ENCODE measurements at regions of chr7 and their contacts with region 1.

Region 1: GRCh38 chr7:30322271-30323005 is 38.0 kb downstream of the ZNRF2 start:
- DNase-seq: peak in 6 of 9 experiments; percentile 8 to 76 (median 18)
- ATAC-seq: peak; percentile 63
- H3K4me3 ChIP-seq: peak overlapping the region; percentile 26 to 30
- H3K4me3 Mint-ChIP-seq: peak overlapping the region; percentile 87
- H3K27ac ChIP-seq: peak overlapping the region; percentile 53 to 92
- H3K27ac Mint-ChIP-seq: peak overlapping the region; percentile 98
- H3K4me1 ChIP-seq: peaks cover 31% of the 10 kb centered on the region
- H3K4me1 Mint-ChIP-seq: peaks cover 77% of the 10 kb centered on the region
- H3K27me3 ChIP-seq: no peaks in the 10 kb centered on the region
- H3K27me3 Mint-ChIP-seq: no peaks in the 10 kb centered on the region
- CTCF ChIP-seq: no peak

Region 2: DNA sequence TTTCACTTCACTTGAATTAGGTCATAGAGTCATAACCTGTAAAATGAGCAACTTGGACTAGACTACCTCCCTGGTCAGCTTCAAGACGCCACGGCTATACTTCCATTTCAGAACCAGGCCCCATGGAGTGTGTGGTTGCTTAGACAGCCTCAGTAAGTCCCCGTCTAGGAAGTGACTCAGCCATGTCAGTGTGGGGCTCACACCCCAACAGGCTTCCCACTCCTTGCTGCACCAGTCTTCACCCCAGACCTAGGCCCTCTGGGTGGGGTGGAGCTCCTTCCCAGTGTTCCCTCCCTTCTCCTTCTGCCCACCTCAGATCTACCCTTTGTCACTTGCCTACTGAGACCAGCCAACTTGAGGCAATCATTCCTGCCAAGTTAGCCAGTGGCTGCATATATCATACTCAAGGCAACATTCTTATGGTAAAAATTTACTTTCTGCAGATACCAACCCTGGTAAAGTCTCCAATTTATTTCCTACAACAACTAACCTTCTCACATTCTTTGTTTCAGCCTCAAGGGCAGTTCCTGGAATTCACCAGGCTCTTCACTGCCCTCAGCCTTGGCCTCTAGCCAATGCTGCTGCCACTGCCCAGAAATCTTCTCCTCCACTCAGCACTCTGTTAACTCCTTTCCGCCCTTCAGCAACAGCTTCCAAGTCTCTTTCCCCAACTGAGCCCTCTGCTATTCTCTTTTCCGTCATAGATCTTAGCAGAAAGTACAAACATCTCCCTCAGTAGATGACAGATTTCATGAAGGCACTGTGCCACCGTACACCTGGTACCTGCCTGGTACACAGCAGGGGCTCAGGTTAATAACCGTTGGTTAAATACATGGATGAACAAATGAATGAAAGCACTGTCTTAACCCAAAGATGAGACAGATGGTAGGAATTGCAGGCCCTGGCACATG is 69.3 kb before region 1 on chr7:
- CTCF ChIA-PET with region 1: no interaction called
- POLR2A ChIA-PET with region 1: no interaction called
- intact Hi-C with region 1: no loop called
- DNase-seq: no peak
- ATAC-seq: no peak
- H3K4me3 ChIP-seq: no peak overlapping the region
- H3K4me3 Mint-ChIP-seq: no peak overlapping the region
- H3K27ac ChIP-seq: no peak overlapping the region
- H3K27ac Mint-ChIP-seq: no peak overlapping the region
- H3K4me1 ChIP-seq: peaks cover 8% of the 10 kb centered on the region
- H3K4me1 Mint-ChIP-seq: peaks cover 16% of the 10 kb centered on the region
- H3K27me3 ChIP-seq: no peaks in the 10 kb centered on the region
- H3K27me3 Mint-ChIP-seq: no peaks in the 10 kb centered on the region
- CTCF ChIP-seq: no peak

Region 3: GRCh38 chr7:30308389-30308788 is 14.0 kb before region 1 on chr7:
- CTCF ChIA-PET with region 1: interaction called, 3 read pairs
- POLR2A ChIA-PET with region 1: interaction called, 8 read pairs
- intact Hi-C with region 1: loop called (anchors 1 to 2 kb)
- DNase-seq: no peak
- ATAC-seq: no peak
- H3K4me3 ChIP-seq: no peak overlapping the region
- H3K4me3 Mint-ChIP-seq: no peak overlapping the region
- H3K27ac ChIP-seq: no peak overlapping the region
- H3K27ac Mint-ChIP-seq: no peak overlapping the region
- H3K4me1 ChIP-seq: peaks cover 25% of the 10 kb centered on the region
- H3K4me1 Mint-ChIP-seq: peaks cover 79% of the 10 kb centered on the region
- H3K27me3 ChIP-seq: no peaks in the 10 kb centered on the region
- H3K27me3 Mint-ChIP-seq: no peaks in the 10 kb centered on the region
- CTCF ChIP-seq: no peak

Region 4: DNA sequence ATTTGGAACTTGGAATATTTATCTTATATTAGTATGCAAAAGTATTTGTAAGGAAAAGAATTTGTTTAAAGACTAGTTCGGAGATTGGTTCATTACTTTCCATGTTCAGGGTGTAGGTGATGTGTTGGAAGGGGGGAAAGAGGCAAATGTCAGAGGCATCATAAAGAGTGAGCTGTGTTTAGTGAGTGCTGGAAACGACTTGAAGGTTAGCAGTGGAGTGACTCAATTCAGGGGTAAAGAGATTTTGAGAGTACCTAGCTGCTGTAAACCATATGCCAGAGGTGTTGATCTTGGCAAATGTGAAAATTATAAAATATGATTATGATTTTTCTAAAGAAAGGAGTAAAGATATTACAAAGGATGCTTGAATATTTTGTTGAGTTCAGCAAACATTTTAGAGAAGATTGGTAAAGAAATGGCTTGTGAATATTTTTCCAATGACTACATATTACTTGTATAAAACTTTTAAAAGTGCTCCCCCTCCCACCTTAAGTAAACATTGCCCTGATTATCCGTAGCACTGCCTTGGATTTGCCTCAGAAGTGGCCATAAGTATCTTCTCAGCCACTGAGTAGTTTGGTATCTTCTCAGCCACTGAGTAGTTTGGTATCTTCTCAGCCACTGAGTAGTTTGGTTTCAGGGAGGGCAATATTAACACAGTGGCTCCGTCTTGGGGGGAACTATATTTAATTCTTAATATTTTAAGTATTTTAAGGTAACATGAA is 13.5 kb after region 1 on chr7:
- CTCF ChIA-PET with region 1: interaction called, 9 read pairs
- POLR2A ChIA-PET with region 1: interaction called, 10 read pairs
- intact Hi-C with region 1: loop called in 1 of 2 experiments (anchors 2 kb)
- DNase-seq: no peak
- ATAC-seq: no peak
- H3K4me3 ChIP-seq: no peak overlapping the region
- H3K4me3 Mint-ChIP-seq: no peak overlapping the region
- H3K27ac ChIP-seq: no peak overlapping the region
- H3K27ac Mint-ChIP-seq: no peak overlapping the region
- H3K4me1 ChIP-seq: peaks cover 8% of the 10 kb centered on the region
- H3K4me1 Mint-ChIP-seq: peaks cover 73% of the 10 kb centered on the region
- H3K27me3 ChIP-seq: no peaks in the 10 kb centered on the region
- H3K27me3 Mint-ChIP-seq: no peaks in the 10 kb centered on the region
- CTCF ChIP-seq: no peak

Region 5: GRCh38 chr7:30727061-30727945 is 404.9 kb after region 1 on chr7:
- CTCF ChIA-PET with region 1: no interaction called
- POLR2A ChIA-PET with region 1: no interaction called
- intact Hi-C with region 1: no loop called
- DNase-seq: peak; percentile 21 to 83 (median 64)
- ATAC-seq: peak; percentile 91
- H3K4me3 ChIP-seq: peak overlapping the region; percentile 49 to 53
- H3K4me3 Mint-ChIP-seq: peak overlapping the region; percentile 85
- H3K27ac ChIP-seq: peak overlapping the region; percentile 55 to 68
- H3K27ac Mint-ChIP-seq: peak overlapping the region; percentile 94
- H3K4me1 ChIP-seq: peaks cover 49% of the 10 kb centered on the region
- H3K4me1 Mint-ChIP-seq: peaks cover 75% of the 10 kb centered on the region
- H3K27me3 ChIP-seq: no peaks in the 10 kb centered on the region
- H3K27me3 Mint-ChIP-seq: no peaks in the 10 kb centered on the region
- CTCF ChIP-seq: no peak